ENCODE measurements at regions of chr16 and their contacts with region 1.

Region 1: DNA sequence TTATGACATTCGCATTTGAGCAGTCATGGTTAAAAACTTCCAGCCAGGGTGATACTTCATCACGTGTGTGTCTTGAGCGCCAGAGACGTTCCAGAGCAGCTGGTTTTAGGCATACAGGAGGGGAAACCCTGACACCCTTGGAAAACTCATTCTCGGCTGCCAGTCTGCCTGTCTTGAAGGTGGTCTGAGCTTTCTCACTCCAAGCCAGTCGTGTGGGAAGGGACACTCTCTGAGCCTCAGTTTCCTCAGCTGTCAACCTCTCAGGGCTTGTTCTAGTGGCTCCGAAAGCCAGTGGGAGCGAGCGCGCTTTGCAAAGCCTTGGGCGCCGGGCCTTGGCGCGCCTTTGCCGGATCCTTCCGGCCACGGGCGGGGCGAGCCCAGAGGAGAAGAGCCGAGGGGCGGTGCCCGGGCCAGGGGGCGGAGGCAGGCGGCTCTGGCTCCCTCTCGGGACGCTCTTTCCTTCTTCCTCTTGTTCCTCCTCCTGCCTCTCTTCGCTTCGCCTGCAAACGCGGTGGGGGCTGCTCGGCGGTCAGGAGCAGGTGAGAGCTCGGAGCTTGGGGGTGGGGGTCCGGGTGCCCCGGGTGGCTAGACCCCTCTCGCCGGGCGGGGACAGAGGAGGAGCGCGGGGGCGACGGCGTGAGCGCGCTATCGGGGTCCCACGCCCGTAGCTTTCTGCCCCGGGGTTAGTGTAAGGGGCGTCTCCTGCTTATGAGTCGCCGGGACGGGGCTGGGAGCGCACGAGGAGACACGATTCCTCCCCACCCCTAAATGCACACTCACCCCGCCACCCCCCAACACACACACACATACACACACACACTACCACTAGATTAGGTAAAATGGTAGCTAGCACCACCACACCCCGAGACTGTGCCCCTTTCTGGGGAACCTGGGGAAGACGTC is at the start of gene LDAF1:
- DNase-seq: peak; percentile 95
- total RNA-seq, gene LDAF1: 104 TPM

Region 2: DNA sequence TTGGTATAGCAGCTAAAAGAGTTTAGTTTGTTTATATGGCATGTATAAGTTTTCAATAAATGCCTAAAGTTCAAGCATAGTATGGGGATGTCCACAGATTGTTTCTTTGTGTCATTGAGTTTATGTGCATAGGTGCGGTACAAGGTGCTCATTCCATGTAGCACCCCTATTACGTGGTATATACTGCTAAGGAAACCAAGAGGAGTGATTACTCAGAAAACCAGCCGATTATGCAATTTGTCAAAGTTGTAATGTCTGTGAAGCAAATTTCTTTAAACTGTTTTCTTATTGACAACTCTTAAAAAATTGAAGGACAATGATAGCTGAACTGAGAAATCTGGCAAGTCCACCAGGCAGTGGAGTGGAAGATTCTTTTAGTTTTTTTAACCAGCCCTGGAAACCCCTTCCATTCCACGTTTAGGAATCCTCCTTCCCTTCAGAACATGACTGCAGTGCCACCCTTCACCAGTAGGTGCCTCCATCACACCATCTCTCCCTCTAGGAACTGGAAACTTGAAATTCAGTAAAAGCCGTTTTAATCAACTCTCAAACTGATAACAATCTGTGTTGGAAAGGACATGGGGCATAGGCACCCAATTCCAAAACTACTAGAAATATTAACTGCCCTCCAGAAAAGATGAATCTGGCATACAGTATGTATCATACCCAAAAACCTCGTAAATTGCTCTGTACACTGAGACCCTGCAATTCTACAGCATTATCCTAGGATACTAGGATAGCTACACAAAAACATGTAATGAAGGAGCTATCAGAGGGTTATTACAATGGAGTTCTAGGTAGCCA is 308.7 kb before region 1 on chr16:
- intact Hi-C with region 1: loop called (anchors 10 kb)
- DNase-seq: no peak

Region 3: DNA sequence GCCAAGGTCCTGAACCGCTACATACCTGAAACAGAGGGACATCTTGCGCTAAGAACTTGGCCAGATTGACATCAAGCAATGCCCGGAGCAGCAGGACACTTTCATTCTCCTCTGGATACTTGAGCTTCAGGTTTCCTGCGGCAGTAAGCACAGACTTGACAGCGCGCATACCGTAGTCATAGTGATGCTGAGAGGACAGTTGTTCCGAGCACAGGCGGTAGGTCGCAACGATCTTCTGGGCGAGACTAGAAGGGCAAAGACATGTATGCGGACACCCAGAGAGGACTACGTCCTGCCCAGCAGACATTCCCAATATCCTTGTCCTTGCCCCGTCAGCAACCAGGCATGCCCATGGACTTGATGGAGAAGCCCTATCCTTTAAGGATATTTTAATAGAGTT is 120.7 kb before region 1 on chr16:
- intact Hi-C with region 1: no loop called
- DNase-seq: no peak

Region 4: GRCh38 chr16:21277927-21278706 is 119.7 kb after region 1 on chr16 and contains the start of gene CRYM:
- intact Hi-C with region 1: loop called (anchors 5 kb)
- DNase-seq: peak; percentile 84
- total RNA-seq, gene CRYM: 105 TPM

Region 5: DNA sequence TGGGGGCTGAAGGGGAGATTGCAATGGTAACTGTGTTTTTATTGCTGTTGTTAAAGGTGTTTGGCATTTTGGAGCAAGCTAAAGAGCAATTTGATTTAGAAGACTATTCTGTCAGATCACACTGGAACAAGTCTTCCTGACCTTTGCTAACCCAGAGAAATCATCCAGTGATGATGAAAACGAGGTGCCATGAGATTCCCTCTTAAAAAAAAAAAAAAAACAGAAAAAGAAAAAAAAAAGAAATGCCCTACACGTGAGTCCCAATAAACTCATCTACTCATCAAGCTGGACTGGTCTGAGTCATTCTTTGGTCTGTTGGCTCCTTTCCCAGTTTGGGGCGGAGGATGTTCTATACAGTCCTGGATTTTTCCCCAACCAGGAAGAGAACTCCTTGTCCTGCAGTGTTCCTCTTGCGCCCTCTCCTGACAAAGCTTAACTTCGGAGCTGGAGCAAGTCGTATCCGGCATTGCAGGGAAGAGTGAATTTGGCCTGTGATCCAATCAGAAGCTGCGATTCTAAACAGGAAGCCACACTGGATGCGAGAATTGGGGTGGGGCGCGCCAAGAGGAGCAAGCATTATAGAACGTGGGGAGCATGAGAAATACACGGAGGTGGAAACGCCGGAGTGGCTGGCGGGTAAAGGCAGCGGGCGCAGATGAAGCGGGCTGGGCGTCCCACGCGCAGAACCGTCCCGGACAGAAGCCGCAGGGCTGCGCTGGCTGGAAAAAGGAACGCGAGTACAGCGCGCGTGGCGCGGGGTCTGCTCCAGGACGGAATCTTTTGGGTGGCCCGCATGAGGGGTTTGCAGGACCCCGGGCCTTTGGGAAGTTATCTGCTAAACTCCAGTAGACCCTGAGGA is 142.1 kb after region 1 on chr16:
- intact Hi-C with region 1: loop called (anchors 2 kb)
- DNase-seq: peak; percentile 91

Region 6: DNA sequence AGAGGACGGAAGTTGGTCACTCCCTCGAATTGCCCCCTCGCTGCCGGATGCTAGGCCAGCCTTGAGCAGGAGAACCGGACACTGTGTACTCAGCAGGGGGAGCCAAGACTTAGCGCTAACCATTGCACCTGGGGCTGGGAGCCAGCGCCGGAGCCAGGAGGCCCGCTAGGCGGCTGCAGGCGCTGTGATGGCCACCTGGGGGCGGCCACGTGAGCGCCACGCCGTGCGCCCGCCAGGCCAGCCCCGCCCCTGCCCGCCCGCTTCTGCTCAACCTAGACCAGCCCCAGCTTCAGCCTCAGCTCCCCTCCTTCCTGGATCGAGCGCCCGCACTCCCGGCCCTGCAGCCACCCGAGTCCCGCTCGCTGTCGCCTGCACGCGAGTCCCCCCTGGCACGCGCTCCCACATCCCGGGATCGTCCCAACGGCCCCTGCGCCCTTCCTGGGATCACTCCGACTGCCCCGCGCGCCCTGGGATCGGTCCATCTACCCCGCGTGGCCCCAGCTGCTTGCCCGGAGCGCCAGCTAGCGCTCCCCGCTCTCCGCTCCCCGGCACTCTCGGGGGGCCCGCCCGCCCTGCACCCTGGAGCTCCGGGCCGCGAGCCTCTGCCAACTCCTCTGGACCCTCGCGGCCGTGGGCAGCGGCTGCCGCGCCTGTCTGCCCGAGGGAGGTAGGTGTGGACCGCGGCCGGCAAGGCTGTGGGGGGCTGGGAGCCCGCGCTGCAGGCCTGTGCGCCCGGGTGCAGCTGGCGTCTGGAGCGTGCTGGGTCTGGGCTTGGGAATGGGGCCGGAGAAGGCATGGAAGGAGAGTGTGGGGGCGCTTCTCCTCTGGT is 1047.8 kb after region 1 on chr16 and contains the start of gene EEF2K:
- intact Hi-C with region 1: loop called (anchors 10 kb)
- DNase-seq: peak; percentile 94
- total RNA-seq, gene EEF2K: 16.2 TPM